Naive thymus-derived CD4-positive, alpha-beta T cell (primary cell): ENCODE measurements at regions of chr19 and their contacts with region 1.

Region 1: GRCh38 chr19:19385108-19385899 is 20.2 kb upstream of the GATAD2A start:
- DNase-seq: peak; percentile 95 to 100 (median 99)
- ATAC-seq: peak; percentile 93
- H3K4me3 ChIP-seq: peak overlapping the region; percentile 81
- H3K4me3 Mint-ChIP-seq: peak overlapping the region; percentile 89 to 99 (median 94)
- H3K27ac ChIP-seq: peak overlapping the region; percentile 88
- H3K27ac Mint-ChIP-seq: peak overlapping the region; percentile 25 to 96 (median 93)
- H3K4me1 ChIP-seq: peaks cover 29 to 42% of the 10 kb centered on the region in 2 donors
- H3K4me1 Mint-ChIP-seq: peaks cover 36 to 46% (median 42%) of the 10 kb centered on the region in 7 donors
- H3K27me3 ChIP-seq: no peaks in the 10 kb centered on the region
- H3K27me3 Mint-ChIP-seq: no peaks in the 10 kb centered on the region

Region 2: GRCh38 chr19:19342756-19343322 is 42.5 kb before region 1 on chr19:
- CTCF ChIA-PET with region 1: no interaction called
- POLR2A ChIA-PET with region 1: no interaction called
- intact Hi-C with region 1: no loop called
- DNase-seq: no peak
- ATAC-seq: no peak
- H3K4me3 ChIP-seq: no peak overlapping the region
- H3K4me3 Mint-ChIP-seq: no peak overlapping the region
- H3K27ac ChIP-seq: no peak overlapping the region
- H3K27ac Mint-ChIP-seq: no peak overlapping the region
- H3K4me1 ChIP-seq: no peaks in the 10 kb centered on the region
- H3K4me1 Mint-ChIP-seq: no peaks in the 10 kb centered on the region
- H3K27me3 ChIP-seq: no peaks in the 10 kb centered on the region
- H3K27me3 Mint-ChIP-seq: no peaks in the 10 kb centered on the region

Region 3: GRCh38 chr19:19361075-19361594 is 24.2 kb before region 1 on chr19:
- CTCF ChIA-PET with region 1: interaction called, 3 read pairs
- POLR2A ChIA-PET with region 1: interaction called, 10 read pairs
- intact Hi-C with region 1: loop called (anchors 1 kb)
- DNase-seq: peak; percentile 40 to 70 (median 57)
- ATAC-seq: peak; percentile 79
- H3K4me3 ChIP-seq: no peak overlapping the region
- H3K4me3 Mint-ChIP-seq: peak overlapping the region in 8 of 10 donors; percentile 7 to 73 (median 54)
- H3K27ac ChIP-seq: no peak overlapping the region
- H3K27ac Mint-ChIP-seq: peak overlapping the region in 8 of 9 donors; percentile 5 to 78 (median 68)
- H3K4me1 ChIP-seq: peaks cover 15 to 21% of the 10 kb centered on the region in 2 donors
- H3K4me1 Mint-ChIP-seq: peaks cover 18 to 51% (median 35%) of the 10 kb centered on the region in 7 donors
- H3K27me3 ChIP-seq: no peaks in the 10 kb centered on the region
- H3K27me3 Mint-ChIP-seq: no peaks in the 10 kb centered on the region

Region 4: GRCh38 chr19:19372656-19373416 is 12.5 kb before region 1 on chr19:
- CTCF ChIA-PET with region 1: interaction called, 3 read pairs
- POLR2A ChIA-PET with region 1: interaction called, 10 read pairs
- intact Hi-C with region 1: loop called in 1 of 2 experiments (anchors 1 kb)
- DNase-seq: peak in 3 of 9 donors; percentile 14 to 27 (median 23)
- ATAC-seq: peak; percentile 97
- H3K4me3 ChIP-seq: peak overlapping the region; percentile 4
- H3K4me3 Mint-ChIP-seq: peak overlapping the region in 9 of 10 donors; percentile 55 to 72 (median 64)
- H3K27ac ChIP-seq: peak overlapping the region; percentile 41
- H3K27ac Mint-ChIP-seq: peak overlapping the region; percentile 68 to 91 (median 84)
- H3K4me1 ChIP-seq: peaks cover 5 to 12% of the 10 kb centered on the region in 2 donors
- H3K4me1 Mint-ChIP-seq: peaks cover 6 to 12% (median 8%) of the 10 kb centered on the region in 7 donors
- H3K27me3 ChIP-seq: no peaks in the 10 kb centered on the region
- H3K27me3 Mint-ChIP-seq: no peaks in the 10 kb centered on the region

Region 5: GRCh38 chr19:19399733-19400433 is 14.6 kb after region 1 on chr19:
- CTCF ChIA-PET with region 1: interaction called, 6 read pairs
- POLR2A ChIA-PET with region 1: interaction called, 14 read pairs
- intact Hi-C with region 1: loop called (anchors 1 kb)
- DNase-seq: no peak
- ATAC-seq: no peak
- H3K4me3 ChIP-seq: no peak overlapping the region
- H3K4me3 Mint-ChIP-seq: no peak overlapping the region
- H3K27ac ChIP-seq: no peak overlapping the region
- H3K27ac Mint-ChIP-seq: peak overlapping the region in 6 of 9 donors; percentile 32 to 77 (median 50)
- H3K4me1 ChIP-seq: peaks cover 2 to 6% of the 10 kb centered on the region in 2 donors
- H3K4me1 Mint-ChIP-seq: peaks cover 16 to 56% (median 51%) of the 10 kb centered on the region in 7 donors
- H3K27me3 ChIP-seq: no peaks in the 10 kb centered on the region
- H3K27me3 Mint-ChIP-seq: no peaks in the 10 kb centered on the region

Region 6: GRCh38 chr19:19459707-19460251 is 74.5 kb after region 1 on chr19:
- CTCF ChIA-PET with region 1: no interaction called
- POLR2A ChIA-PET with region 1: interaction called, 4 read pairs
- intact Hi-C with region 1: loop called in 1 of 2 experiments (anchors 1 kb)
- DNase-seq: peak in 8 of 9 donors; percentile 49 to 75 (median 61)
- ATAC-seq: peak; percentile 72
- H3K4me3 ChIP-seq: peak overlapping the region; percentile 55
- H3K4me3 Mint-ChIP-seq: peak overlapping the region; percentile 85 to 92 (median 91)
- H3K27ac ChIP-seq: peak overlapping the region; percentile 82
- H3K27ac Mint-ChIP-seq: peak overlapping the region; percentile 94 to 99 (median 98)
- H3K4me1 ChIP-seq: peaks cover 82% of the 10 kb centered on the region in 2 donors
- H3K4me1 Mint-ChIP-seq: peaks cover 63 to 84% (median 72%) of the 10 kb centered on the region in 7 donors
- H3K27me3 ChIP-seq: no peaks in the 10 kb centered on the region
- H3K27me3 Mint-ChIP-seq: no peaks in the 10 kb centered on the region

Region 7: GRCh38 chr19:19515764-19516519 is 130.6 kb after region 1 on chr19 and contains the start of gene NDUFA13:
- CTCF ChIA-PET with region 1: no interaction called
- POLR2A ChIA-PET with region 1: interaction called, 3 read pairs
- intact Hi-C with region 1: loop called in 1 of 2 experiments (anchors 1 kb)
- DNase-seq: peak; percentile 88 to 98 (median 92)
- ATAC-seq: peak; percentile 96
- H3K4me3 ChIP-seq: peak within 1 kb of the TSS; percentile 96
- H3K4me3 Mint-ChIP-seq: peak within 1 kb of the TSS; percentile 89 to 98 (median 95)
- H3K27ac ChIP-seq: peak within 1 kb of the TSS; percentile 83
- H3K27ac Mint-ChIP-seq: peak within 1 kb of the TSS; percentile 89 to 98 (median 96)
- H3K4me1 ChIP-seq: peaks cover 13 to 14% of the 10 kb centered on the region in 2 donors
- H3K4me1 Mint-ChIP-seq: peaks cover 16 to 42% (median 27%) of the 10 kb centered on the region in 7 donors
- H3K27me3 ChIP-seq: no peaks in the 10 kb centered on the region
- H3K27me3 Mint-ChIP-seq: no peaks in the 10 kb centered on the region
- total RNA-seq, gene NDUFA13: 172 to 362 (median 176) TPM